ENCODE measurements at regions of chr11 and their contacts with region 1.

Region 1: GRCh38 chr11:95699631-95700470 is 89.7 kb downstream of the FAM76B start:
- DNase-seq: peak; percentile 39 to 52 (median 43)
- H3K4me3 ChIP-seq: peak overlapping the region; percentile 3 to 33
- H3K4me3 Mint-ChIP-seq: peak overlapping the region; percentile 72 to 88 (median 82)
- H3K27ac ChIP-seq: peak overlapping the region; percentile 65
- H3K27ac Mint-ChIP-seq: peak overlapping the region; percentile 90 to 97 (median 96)
- H3K4me1 ChIP-seq: peaks cover 80% of the 10 kb centered on the region
- H3K4me1 Mint-ChIP-seq: peaks cover 38 to 60% (median 54%) of the 10 kb centered on the region in 4 donors
- H3K27me3 ChIP-seq: no peaks in the 10 kb centered on the region
- H3K27me3 Mint-ChIP-seq: no peaks in the 10 kb centered on the region

Region 2: GRCh38 chr11:95545116-95545875 is 154.6 kb before region 1 on chr11:
- CTCF ChIA-PET with region 1: no interaction called
- POLR2A ChIA-PET with region 1: no interaction called
- intact Hi-C with region 1: no loop called
- DNase-seq: no peak
- H3K4me3 ChIP-seq: no peak overlapping the region
- H3K4me3 Mint-ChIP-seq: no peak overlapping the region
- H3K27ac ChIP-seq: no peak overlapping the region
- H3K27ac Mint-ChIP-seq: no peak overlapping the region
- H3K4me1 ChIP-seq: peaks cover 15% of the 10 kb centered on the region
- H3K4me1 Mint-ChIP-seq: peaks cover 3 to 13% (median 10%) of the 10 kb centered on the region in 4 donors
- H3K27me3 ChIP-seq: no peaks in the 10 kb centered on the region
- H3K27me3 Mint-ChIP-seq: no peaks in the 10 kb centered on the region

Region 3: GRCh38 chr11:95647871-95648270 is 52.0 kb before region 1 on chr11:
- CTCF ChIA-PET with region 1: no interaction called
- POLR2A ChIA-PET with region 1: no interaction called
- intact Hi-C with region 1: no loop called
- DNase-seq: no peak
- H3K4me3 ChIP-seq: no peak overlapping the region
- H3K4me3 Mint-ChIP-seq: no peak overlapping the region
- H3K27ac ChIP-seq: no peak overlapping the region
- H3K27ac Mint-ChIP-seq: peak overlapping the region in 1 of 7 donors; percentile 25
- H3K4me1 ChIP-seq: no peaks in the 10 kb centered on the region
- H3K4me1 Mint-ChIP-seq: peaks cover 0 to under 1% (median 0%) of the 10 kb centered on the region in 4 donors
- H3K27me3 ChIP-seq: no peaks in the 10 kb centered on the region
- H3K27me3 Mint-ChIP-seq: no peaks in the 10 kb centered on the region

Region 4: DNA sequence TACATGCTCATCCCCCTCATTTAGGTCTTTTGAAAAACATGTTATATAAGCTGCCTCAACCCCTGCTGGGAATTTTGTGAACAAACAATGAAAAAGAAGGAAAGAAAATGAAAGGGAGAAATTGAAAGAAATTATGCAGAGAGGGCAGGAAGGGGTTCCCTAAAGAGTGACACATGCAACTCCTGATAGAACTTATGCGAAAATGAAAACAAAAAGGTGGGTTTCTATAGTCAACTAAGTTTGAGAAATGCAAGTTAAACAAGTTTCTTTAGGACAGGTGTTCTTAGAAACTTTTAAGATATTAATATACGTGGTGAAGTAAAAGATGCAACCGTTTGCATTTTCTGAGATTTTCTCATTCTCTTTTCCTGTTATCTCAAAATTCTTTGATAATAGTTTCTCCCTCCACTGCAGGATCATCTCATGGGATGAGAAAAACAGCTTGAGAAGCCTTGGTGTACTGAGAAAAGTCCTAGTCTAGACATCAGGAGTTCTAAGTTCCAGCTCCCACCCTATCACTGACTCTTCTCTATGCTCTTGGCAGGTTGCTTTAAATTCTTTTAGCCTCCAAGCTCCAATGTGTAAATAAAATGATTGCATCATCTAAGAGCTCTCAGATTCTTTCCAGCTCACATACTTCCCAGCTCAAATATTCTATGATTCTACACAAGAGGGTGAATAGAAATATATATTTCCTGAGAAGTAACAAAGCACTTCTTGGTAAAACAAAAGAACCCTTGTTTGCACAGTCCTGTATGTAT is 19.5 kb before region 1 on chr11:
- CTCF ChIA-PET with region 1: interaction called, 20 read pairs
- POLR2A ChIA-PET with region 1: interaction called, 11 read pairs
- intact Hi-C with region 1: no loop called
- DNase-seq: no peak
- H3K4me3 ChIP-seq: no peak overlapping the region
- H3K4me3 Mint-ChIP-seq: peak overlapping the region; percentile 7 to 72 (median 64)
- H3K27ac ChIP-seq: no peak overlapping the region
- H3K27ac Mint-ChIP-seq: peak overlapping the region; percentile 17 to 83 (median 68)
- H3K4me1 ChIP-seq: peaks cover 42% of the 10 kb centered on the region
- H3K4me1 Mint-ChIP-seq: peaks cover 17 to 81% (median 51%) of the 10 kb centered on the region in 4 donors
- H3K27me3 ChIP-seq: no peaks in the 10 kb centered on the region
- H3K27me3 Mint-ChIP-seq: no peaks in the 10 kb centered on the region

Region 5: GRCh38 chr11:95688580-95689189 is 11.2 kb before region 1 on chr11:
- CTCF ChIA-PET with region 1: interaction called, 103 read pairs
- POLR2A ChIA-PET with region 1: interaction called, 78 read pairs
- intact Hi-C with region 1: loop called (anchors 1 kb)
- DNase-seq: peak; percentile 65 to 69 (median 66)
- H3K4me3 ChIP-seq: peak overlapping the region in 1 of 2 donors; percentile 16
- H3K4me3 Mint-ChIP-seq: peak overlapping the region in 1 of 8 donors; percentile 1
- H3K27ac ChIP-seq: peak overlapping the region; percentile 41
- H3K27ac Mint-ChIP-seq: no peak overlapping the region
- H3K4me1 ChIP-seq: peaks cover 80% of the 10 kb centered on the region
- H3K4me1 Mint-ChIP-seq: peaks cover 16 to 25% (median 23%) of the 10 kb centered on the region in 4 donors
- H3K27me3 ChIP-seq: no peaks in the 10 kb centered on the region
- H3K27me3 Mint-ChIP-seq: no peaks in the 10 kb centered on the region